ENCODE measurements at regions of chr5 and their contacts with region 1.

Region 1: DNA sequence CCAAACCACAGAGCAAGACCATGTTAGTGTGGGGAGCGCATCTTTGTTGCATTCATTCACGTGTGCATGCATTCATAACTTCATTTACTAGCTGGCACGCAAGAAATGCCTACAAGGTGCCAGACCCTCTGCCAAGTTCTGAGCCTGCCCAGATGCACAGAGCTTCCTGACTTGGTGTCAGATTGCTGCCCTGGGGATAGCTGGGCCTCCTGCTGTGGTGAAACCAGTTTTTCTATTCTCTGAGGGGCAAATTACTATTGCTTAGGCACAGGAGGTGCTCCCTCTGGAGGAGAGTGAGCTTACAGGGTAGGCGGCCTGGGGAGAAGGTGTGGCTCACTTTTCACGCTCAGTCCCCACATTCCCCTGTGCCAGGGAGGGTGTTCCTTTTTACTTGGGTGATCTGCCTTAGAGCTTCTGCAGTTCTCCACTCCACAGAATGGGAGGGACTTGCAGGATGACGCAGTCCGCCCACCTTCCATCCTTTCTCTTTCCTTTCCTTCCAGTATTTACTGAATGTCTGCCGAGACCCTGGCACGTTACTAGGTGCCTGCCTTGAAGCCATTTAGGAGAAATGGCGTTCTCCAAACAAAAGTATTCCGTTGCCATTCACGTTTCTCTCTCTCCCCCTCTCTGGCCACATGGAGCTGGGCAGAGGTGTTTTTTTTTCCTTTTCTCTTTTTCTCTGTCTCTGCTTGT is 27.9 kb upstream of the CTNNA1 start:
- DNase-seq: peak; percentile 82 to 90
- H3K4me3 ChIP-seq: no peak overlapping the region
- H3K4me3 Mint-ChIP-seq: peak overlapping the region; percentile 52
- H3K27ac Mint-ChIP-seq: peak overlapping the region; percentile 83
- H3K4me1 ChIP-seq: peaks cover 52% of the 10 kb centered on the region
- H3K4me1 Mint-ChIP-seq: peaks cover 39% of the 10 kb centered on the region
- H3K27me3 ChIP-seq: no peaks in the 10 kb centered on the region
- H3K27me3 Mint-ChIP-seq: no peaks in the 10 kb centered on the region
- CTCF ChIP-seq: peak; percentile 41 to 63

Region 2: GRCh38 chr5:138594305-138595058 is 130.8 kb before region 1 on chr5:
- CTCF ChIA-PET with region 1: interaction called, 4 read pairs
- POLR2A ChIA-PET with region 1: no interaction called
- intact Hi-C with region 1: loop called (anchors 5 kb)
- DNase-seq: no peak
- H3K4me3 ChIP-seq: no peak overlapping the region
- H3K4me3 Mint-ChIP-seq: no peak overlapping the region
- H3K27ac Mint-ChIP-seq: no peak overlapping the region
- H3K4me1 ChIP-seq: no peaks in the 10 kb centered on the region
- H3K4me1 Mint-ChIP-seq: no peaks in the 10 kb centered on the region
- H3K27me3 ChIP-seq: no peaks in the 10 kb centered on the region
- H3K27me3 Mint-ChIP-seq: no peaks in the 10 kb centered on the region
- CTCF ChIP-seq: peak in 1 of 2 experiments; percentile 29

Region 3: GRCh38 chr5:138641547-138642298 is 83.6 kb before region 1 on chr5:
- CTCF ChIA-PET with region 1: no interaction called
- POLR2A ChIA-PET with region 1: no interaction called
- intact Hi-C with region 1: loop called (anchors 1 kb)
- DNase-seq: peak; percentile 78 to 83
- H3K4me3 ChIP-seq: no peak overlapping the region
- H3K4me3 Mint-ChIP-seq: no peak overlapping the region
- H3K27ac Mint-ChIP-seq: no peak overlapping the region
- H3K4me1 ChIP-seq: no peaks in the 10 kb centered on the region
- H3K4me1 Mint-ChIP-seq: no peaks in the 10 kb centered on the region
- H3K27me3 ChIP-seq: no peaks in the 10 kb centered on the region
- H3K27me3 Mint-ChIP-seq: no peaks in the 10 kb centered on the region
- CTCF ChIP-seq: peak; percentile 77 to 84

Region 4: DNA sequence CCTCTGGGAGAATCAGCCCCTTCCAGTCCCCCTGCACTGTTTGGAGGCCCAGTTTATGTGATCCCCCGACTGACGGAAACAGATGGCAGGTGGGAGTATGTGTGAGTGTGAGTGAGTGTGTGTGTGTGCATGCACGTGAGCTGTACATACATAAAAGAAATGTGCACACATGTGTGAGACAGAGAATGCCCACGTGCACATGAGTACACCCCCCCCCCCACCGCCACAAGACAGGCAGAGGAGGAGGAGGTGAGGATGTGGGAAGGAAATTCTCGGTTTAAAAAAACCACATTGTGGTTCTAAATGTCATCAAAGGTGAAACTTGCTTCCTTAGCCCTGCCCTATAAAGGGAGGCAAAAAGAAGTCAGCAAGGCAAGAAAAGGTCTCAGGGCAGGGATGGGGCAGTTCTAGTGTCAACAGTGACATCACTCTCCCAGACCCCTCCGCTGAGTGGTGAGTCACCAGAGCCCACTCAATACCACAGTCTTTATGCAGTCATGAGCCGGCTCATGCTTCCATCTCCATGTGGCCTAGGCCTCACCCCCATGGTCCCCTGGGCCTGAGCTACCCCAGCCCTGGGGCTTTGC is 70.9 kb before region 1 on chr5:
- CTCF ChIA-PET with region 1: interaction called, 9 read pairs
- POLR2A ChIA-PET with region 1: no interaction called
- intact Hi-C with region 1: loop called (anchors 1 kb)
- DNase-seq: no peak
- H3K4me3 ChIP-seq: no peak overlapping the region
- H3K4me3 Mint-ChIP-seq: no peak overlapping the region
- H3K27ac Mint-ChIP-seq: no peak overlapping the region
- H3K4me1 ChIP-seq: peaks cover 15% of the 10 kb centered on the region
- H3K4me1 Mint-ChIP-seq: peaks cover 16% of the 10 kb centered on the region
- H3K27me3 ChIP-seq: no peaks in the 10 kb centered on the region
- H3K27me3 Mint-ChIP-seq: no peaks in the 10 kb centered on the region
- CTCF ChIP-seq: no peak

Region 5: GRCh38 chr5:138706655-138707480 is 18.4 kb before region 1 on chr5:
- CTCF ChIA-PET with region 1: interaction called, 9 read pairs
- POLR2A ChIA-PET with region 1: no interaction called
- intact Hi-C with region 1: loop called (anchors 1 kb)
- DNase-seq: no peak
- H3K4me3 ChIP-seq: no peak overlapping the region
- H3K4me3 Mint-ChIP-seq: no peak overlapping the region
- H3K27ac Mint-ChIP-seq: peak overlapping the region; percentile 89
- H3K4me1 ChIP-seq: peaks cover 46% of the 10 kb centered on the region
- H3K4me1 Mint-ChIP-seq: peaks cover 26% of the 10 kb centered on the region
- H3K27me3 ChIP-seq: no peaks in the 10 kb centered on the region
- H3K27me3 Mint-ChIP-seq: no peaks in the 10 kb centered on the region
- CTCF ChIP-seq: no peak

Region 6: GRCh38 chr5:138752951-138753793 is 27.9 kb after region 1 on chr5 and contains the start of gene CTNNA1:
- CTCF ChIA-PET with region 1: no interaction called
- POLR2A ChIA-PET with region 1: interaction called, 10 read pairs
- intact Hi-C with region 1: loop called (anchors 1 kb)
- DNase-seq: peak; percentile 91 to 94
- H3K4me3 ChIP-seq: peak within 1 kb of the TSS; percentile 86
- H3K4me3 Mint-ChIP-seq: peak within 1 kb of the TSS; percentile 93
- H3K27ac Mint-ChIP-seq: peak within 1 kb of the TSS; percentile 97
- H3K4me1 ChIP-seq: peaks cover 18% of the 10 kb centered on the region
- H3K4me1 Mint-ChIP-seq: peaks cover 52% of the 10 kb centered on the region
- H3K27me3 ChIP-seq: no peaks in the 10 kb centered on the region
- H3K27me3 Mint-ChIP-seq: no peaks in the 10 kb centered on the region
- CTCF ChIP-seq: no peak
- total RNA-seq, gene CTNNA1: 392 and 403 TPM in 2 replicates

Measured in Caco-2 (cell line).